CD8-positive, alpha-beta memory T cell (primary cell): ENCODE measurements at regions of chr3 and their contacts with region 1.

Region 1: GRCh38 chr3:108124337-108125152 is 33.7 kb upstream of the CD47 start:
- DNase-seq: peak; percentile 24 to 76 (median 68)
- H3K4me3 ChIP-seq: peak overlapping the region; percentile 58
- H3K4me3 Mint-ChIP-seq: peak overlapping the region; percentile 80 to 94 (median 90)
- H3K27ac ChIP-seq: peak overlapping the region; percentile 75
- H3K27ac Mint-ChIP-seq: peak overlapping the region; percentile 95 to 99 (median 98)
- H3K4me1 ChIP-seq: peaks cover 73% of the 10 kb centered on the region
- H3K4me1 Mint-ChIP-seq: peaks cover 59 to 69% (median 66%) of the 10 kb centered on the region in 3 donors
- H3K27me3 ChIP-seq: no peaks in the 10 kb centered on the region
- H3K27me3 Mint-ChIP-seq: no peaks in the 10 kb centered on the region

Region 2: GRCh38 chr3:108090701-108091451 is 33.7 kb before region 1 on chr3 and contains the start of gene CD47:
- CTCF ChIA-PET with region 1: interaction called, 9 read pairs
- POLR2A ChIA-PET with region 1: interaction called, 22 read pairs
- DNase-seq: peak; percentile 96 to 99 (median 97)
- H3K4me3 ChIP-seq: peak within 1 kb of the TSS; percentile 76
- H3K4me3 Mint-ChIP-seq: peak within 1 kb of the TSS; percentile 84 to 100 (median 98)
- H3K27ac ChIP-seq: peak within 1 kb of the TSS; percentile 97
- H3K27ac Mint-ChIP-seq: peak within 1 kb of the TSS; percentile 93 to 100 (median 100)
- H3K4me1 ChIP-seq: peaks cover 52% of the 10 kb centered on the region
- H3K4me1 Mint-ChIP-seq: peaks cover 30 to 32% (median 30%) of the 10 kb centered on the region in 3 donors
- H3K27me3 ChIP-seq: no peaks in the 10 kb centered on the region
- H3K27me3 Mint-ChIP-seq: peaks cover 0 to 5% of the 10 kb centered on the region in 2 donors
- total RNA-seq, gene CD47: 126 to 131 TPM

Region 3: GRCh38 chr3:108221911-108222852 is 97.6 kb after region 1 on chr3 and contains the start of gene IFT57:
- CTCF ChIA-PET with region 1: interaction called, 21 read pairs
- POLR2A ChIA-PET with region 1: interaction called, 10 read pairs
- DNase-seq: peak; percentile 93 to 98 (median 97)
- H3K4me3 ChIP-seq: peak within 1 kb of the TSS; percentile 85
- H3K4me3 Mint-ChIP-seq: peak within 1 kb of the TSS; percentile 96 to 100 (median 99)
- H3K27ac ChIP-seq: peak within 1 kb of the TSS; percentile 96
- H3K27ac Mint-ChIP-seq: peak within 1 kb of the TSS; percentile 98 to 100 (median 100)
- H3K4me1 ChIP-seq: peaks cover 46% of the 10 kb centered on the region
- H3K4me1 Mint-ChIP-seq: peaks cover 53 to 60% (median 58%) of the 10 kb centered on the region in 3 donors
- H3K27me3 ChIP-seq: no peaks in the 10 kb centered on the region
- H3K27me3 Mint-ChIP-seq: peaks cover 0 to 4% of the 10 kb centered on the region in 2 donors
- total RNA-seq, gene IFT57: 43.0 to 45.9 TPM

Region 4: GRCh38 chr3:108250626-108251025 is 126.1 kb after region 1 on chr3:
- CTCF ChIA-PET with region 1: no interaction called
- POLR2A ChIA-PET with region 1: no interaction called
- DNase-seq: no peak
- H3K4me3 ChIP-seq: no peak overlapping the region
- H3K4me3 Mint-ChIP-seq: no peak overlapping the region
- H3K27ac ChIP-seq: no peak overlapping the region
- H3K27ac Mint-ChIP-seq: no peak overlapping the region
- H3K4me1 ChIP-seq: no peaks in the 10 kb centered on the region
- H3K4me1 Mint-ChIP-seq: no peaks in the 10 kb centered on the region
- H3K27me3 ChIP-seq: no peaks in the 10 kb centered on the region
- H3K27me3 Mint-ChIP-seq: peaks cover 0 to 6% of the 10 kb centered on the region in 2 donors